ENCODE measurements at regions of chr9 and their contacts with region 1.

Region 1: GRCh38 chr9:28155067-28155466 is 581.8 kb upstream of the C9orf72 start:
- DNase-seq: no peak
- ATAC-seq: no peak
- H3K4me3 ChIP-seq: no peak overlapping the region
- H3K27ac ChIP-seq: no peak overlapping the region
- H3K4me1 ChIP-seq: no peaks in the 10 kb centered on the region
- H3K27me3 ChIP-seq: no peaks in the 10 kb centered on the region
- CTCF ChIP-seq: no peak
- POLR2A ChIP-seq: no peak
- RAD21 ChIP-seq: no peak

Region 2: GRCh38 chr9:28073270-28073669 is 81.8 kb before region 1 on chr9:
- CTCF ChIA-PET with region 1: no interaction called
- POLR2A ChIA-PET with region 1: no interaction called
- dilution Hi-C with region 1: no loop called
- in situ Hi-C with region 1: loop called (anchors 25 kb)
- intact Hi-C with region 1: no loop called
- DNase-seq: peak; percentile 36
- ATAC-seq: no peak
- H3K4me3 ChIP-seq: no peak overlapping the region
- H3K27ac ChIP-seq: no peak overlapping the region
- H3K4me1 ChIP-seq: no peaks in the 10 kb centered on the region
- H3K27me3 ChIP-seq: no peaks in the 10 kb centered on the region
- CTCF ChIP-seq: peak; percentile 55
- POLR2A ChIP-seq: no peak
- RAD21 ChIP-seq: peak; percentile 47

Region 3: DNA sequence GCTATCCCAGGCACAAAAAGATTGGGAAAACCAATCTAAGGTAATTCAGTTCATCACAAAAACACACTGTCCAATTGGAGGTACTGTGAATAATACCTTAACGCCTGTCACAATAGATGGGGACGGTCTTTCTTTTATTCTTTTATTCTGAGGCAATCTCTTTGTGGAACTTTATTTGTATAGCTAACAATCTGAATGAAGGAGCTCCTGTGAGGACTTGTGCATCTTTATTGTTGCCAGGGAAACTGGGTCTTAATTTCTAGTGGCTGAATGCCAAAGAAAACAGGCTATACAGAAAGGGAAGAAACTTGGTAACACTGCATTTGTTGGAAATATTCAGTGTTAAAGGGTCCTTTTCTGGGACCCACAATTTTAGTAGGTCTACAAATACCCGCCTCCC is 34.9 kb before region 1 on chr9:
- CTCF ChIA-PET with region 1: no interaction called
- POLR2A ChIA-PET with region 1: no interaction called
- dilution Hi-C with region 1: no loop called
- in situ Hi-C with region 1: no loop called
- intact Hi-C with region 1: no loop called
- DNase-seq: no peak
- ATAC-seq: no peak
- H3K4me3 ChIP-seq: no peak overlapping the region
- H3K27ac ChIP-seq: no peak overlapping the region
- H3K4me1 ChIP-seq: no peaks in the 10 kb centered on the region
- H3K27me3 ChIP-seq: no peaks in the 10 kb centered on the region
- CTCF ChIP-seq: no peak
- POLR2A ChIP-seq: no peak
- RAD21 ChIP-seq: no peak

Measured in IMR-90 (cell line).